ENCODE measurements at regions of chr6 and their contacts with region 1.

Region 1: GRCh38 chr6:42043787-42044475 is 6.4 kb upstream of the TAF8 start:
- DNase-seq: peak; percentile 95
- H3K4me3 Mint-ChIP-seq: peak overlapping the region; percentile 64
- H3K27ac Mint-ChIP-seq: peak overlapping the region; percentile 98
- H3K4me1 Mint-ChIP-seq: peaks cover 90% of the 10 kb centered on the region
- H3K27me3 Mint-ChIP-seq: no peaks in the 10 kb centered on the region

Region 2: GRCh38 chr6:41780546-41781427 is 263.1 kb before region 1 on chr6 and contains the start of gene PRICKLE4:
- CTCF ChIA-PET with region 1: interaction called, 97 read pairs
- DNase-seq: peak; percentile 49
- H3K4me3 Mint-ChIP-seq: peak within 1 kb of the TSS; percentile 84
- H3K27ac Mint-ChIP-seq: peak within 1 kb of the TSS; percentile 72
- H3K4me1 Mint-ChIP-seq: peaks cover 27% of the 10 kb centered on the region
- H3K27me3 Mint-ChIP-seq: peaks cover 59% of the 10 kb centered on the region

Region 3: GRCh38 chr6:41801380-41801779 is 242.6 kb before region 1 on chr6:
- CTCF ChIA-PET with region 1: interaction called, 12 read pairs
- DNase-seq: no peak
- H3K4me3 Mint-ChIP-seq: no peak overlapping the region
- H3K27ac Mint-ChIP-seq: no peak overlapping the region
- H3K4me1 Mint-ChIP-seq: no peaks in the 10 kb centered on the region
- H3K27me3 Mint-ChIP-seq: no peaks in the 10 kb centered on the region

Region 4: DNA sequence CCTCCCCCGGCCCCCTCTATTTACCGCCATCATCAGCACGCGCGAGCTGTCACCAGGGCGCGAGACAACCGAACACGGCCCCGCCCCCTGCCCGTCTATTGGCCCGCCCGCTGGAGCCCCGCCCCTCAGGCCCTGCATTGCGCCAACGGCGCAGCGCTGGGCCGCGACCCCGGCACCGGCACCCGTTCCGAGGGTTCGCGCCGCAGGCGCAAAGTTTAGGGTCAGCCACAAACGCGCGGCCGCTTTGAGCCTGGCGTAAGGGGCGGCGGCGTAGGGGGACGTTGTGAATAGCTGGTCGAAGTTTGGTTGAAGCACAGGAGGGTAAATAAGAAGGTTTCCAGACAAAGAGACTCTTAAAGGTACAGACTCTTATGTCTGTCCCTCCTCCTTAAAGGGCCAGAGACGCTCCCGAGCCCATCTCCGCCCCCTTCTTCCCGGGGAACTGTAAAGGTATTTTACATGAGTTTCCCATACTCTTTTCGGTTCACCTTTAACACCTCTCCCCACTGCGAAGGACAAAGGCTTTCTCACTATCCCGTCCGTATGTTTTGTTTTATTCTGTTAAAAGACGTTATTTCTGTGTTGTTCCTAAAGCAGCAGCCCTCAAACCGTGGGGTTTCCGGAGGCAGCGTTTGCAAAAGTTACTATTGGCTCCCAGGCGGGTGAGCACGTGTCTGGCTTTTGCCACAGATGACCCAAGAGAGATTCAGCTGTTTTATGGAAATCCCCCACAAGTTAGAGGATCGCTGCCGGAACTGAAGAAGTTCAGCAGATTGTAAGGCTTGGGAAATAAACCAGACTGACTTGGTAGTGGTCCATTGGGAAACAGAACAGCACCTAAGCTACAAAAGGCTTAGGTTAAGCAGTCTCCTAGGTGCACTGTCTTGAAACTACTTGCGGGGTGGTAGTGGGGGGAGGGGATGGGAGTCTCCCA is 148.4 kb before region 1 on chr6 and contains the start of gene USP49:
- CTCF ChIA-PET with region 1: interaction called, 112 read pairs
- DNase-seq: peak; percentile 95
- H3K4me3 Mint-ChIP-seq: no peak within 1 kb of the TSS
- H3K27ac Mint-ChIP-seq: peak within 1 kb of the TSS; percentile 79
- H3K4me1 Mint-ChIP-seq: peaks cover 17% of the 10 kb centered on the region
- H3K27me3 Mint-ChIP-seq: no peaks in the 10 kb centered on the region

Region 5: GRCh38 chr6:41920921-41921711 is 122.8 kb before region 1 on chr6 and contains the starts of genes BYSL and MED20:
- CTCF ChIA-PET with region 1: interaction called, 76 read pairs
- DNase-seq: peak; percentile 95
- H3K4me3 Mint-ChIP-seq: peak within 1 kb of the TSS; percentile 100
- H3K27ac Mint-ChIP-seq: peak within 1 kb of the TSS; percentile 99
- H3K4me1 Mint-ChIP-seq: peaks cover 61% of the 10 kb centered on the region
- H3K27me3 Mint-ChIP-seq: no peaks in the 10 kb centered on the region

Region 6: DNA sequence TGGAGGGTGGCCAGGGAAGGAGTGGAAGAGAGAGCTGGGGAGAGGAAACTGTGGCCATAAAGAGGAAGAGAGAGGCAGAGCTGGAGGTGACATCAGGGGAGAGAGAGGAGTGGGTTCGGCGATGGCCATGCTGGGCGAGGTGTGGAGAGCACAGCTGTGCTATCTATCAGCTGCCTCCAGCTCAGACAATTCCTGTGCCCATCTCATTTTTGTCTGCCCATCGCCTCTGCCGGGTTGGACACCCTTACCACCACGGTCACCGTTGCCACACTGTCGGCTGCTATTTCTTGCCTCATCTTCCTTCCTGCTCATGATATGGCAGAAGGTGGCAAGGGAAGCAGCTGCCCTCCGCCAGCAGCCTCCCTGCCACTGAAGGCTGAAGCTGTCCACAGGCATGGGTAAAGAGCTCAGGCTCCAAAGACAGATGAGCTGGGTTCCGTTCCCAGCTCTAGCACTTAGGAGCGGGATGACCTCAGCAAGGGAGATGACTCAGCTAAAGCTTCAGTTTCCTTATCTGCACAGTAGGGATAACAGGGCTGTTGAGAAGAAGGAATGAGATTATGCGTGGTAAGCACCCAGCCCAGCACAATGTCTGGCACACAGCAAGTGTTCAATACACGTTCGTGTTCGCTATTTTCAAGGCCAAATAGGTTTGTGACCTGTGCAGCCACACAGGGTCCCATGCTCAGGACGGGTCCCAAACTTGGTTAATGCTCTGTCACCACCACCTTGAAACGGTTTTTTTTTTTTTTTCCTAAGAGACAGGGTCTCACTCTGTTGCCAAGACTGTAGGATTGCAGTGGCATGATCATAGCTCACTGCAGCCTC is 15.5 kb before region 1 on chr6:
- CTCF ChIA-PET with region 1: interaction called, 44 read pairs
- DNase-seq: no peak
- H3K4me3 Mint-ChIP-seq: peak overlapping the region; percentile 14
- H3K27ac Mint-ChIP-seq: peak overlapping the region; percentile 78
- H3K4me1 Mint-ChIP-seq: peaks cover 91% of the 10 kb centered on the region
- H3K27me3 Mint-ChIP-seq: no peaks in the 10 kb centered on the region

Measured in activated naive CD4-positive, alpha-beta T cell treated with anti-CD3 and anti-CD28 coated beads, Interleukin-2, amount 10 ng/mL, durations not matched to agents 7 days and 5 days (primary cell).